Activated CD8-positive, alpha-beta T cell treated with anti-CD3 and anti-CD28 coated beads for 36 hours (primary cell): ENCODE measurements at regions of chr10 and their contacts with region 1.

Region 1: DNA sequence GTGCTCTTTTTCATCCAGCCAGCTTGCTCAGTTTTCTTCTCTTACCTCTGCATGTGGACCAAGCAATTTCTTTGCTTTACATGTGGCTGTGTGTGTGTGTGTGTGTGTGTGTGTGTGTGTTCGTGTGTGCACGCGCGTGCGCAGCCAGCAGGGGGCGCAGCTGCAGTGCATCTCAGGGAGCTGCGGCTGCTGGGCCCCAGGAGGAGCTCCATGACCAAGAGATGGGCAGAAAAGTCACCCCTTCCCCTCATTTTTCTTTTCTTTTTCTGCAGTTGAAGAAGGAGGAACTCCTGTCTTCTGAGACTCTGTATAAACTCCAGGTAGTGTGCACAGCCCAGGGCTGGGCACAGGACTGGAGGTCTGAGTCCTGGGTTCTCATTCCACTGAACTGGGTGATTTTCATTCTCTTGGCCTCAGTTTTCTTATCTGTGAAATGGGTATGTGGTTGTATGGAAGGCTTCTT is 41.8 kb downstream of the BLNK start:
- DNase-seq: peak; percentile 82
- ATAC-seq: peak; percentile 87
- H3K4me3 Mint-ChIP-seq: no peak overlapping the region
- H3K27ac Mint-ChIP-seq: no peak overlapping the region
- H3K4me1 Mint-ChIP-seq: no peaks in the 10 kb centered on the region
- H3K27me3 Mint-ChIP-seq: no peaks in the 10 kb centered on the region
- CTCF ChIP-seq: peak; percentile 75

Region 2: DNA sequence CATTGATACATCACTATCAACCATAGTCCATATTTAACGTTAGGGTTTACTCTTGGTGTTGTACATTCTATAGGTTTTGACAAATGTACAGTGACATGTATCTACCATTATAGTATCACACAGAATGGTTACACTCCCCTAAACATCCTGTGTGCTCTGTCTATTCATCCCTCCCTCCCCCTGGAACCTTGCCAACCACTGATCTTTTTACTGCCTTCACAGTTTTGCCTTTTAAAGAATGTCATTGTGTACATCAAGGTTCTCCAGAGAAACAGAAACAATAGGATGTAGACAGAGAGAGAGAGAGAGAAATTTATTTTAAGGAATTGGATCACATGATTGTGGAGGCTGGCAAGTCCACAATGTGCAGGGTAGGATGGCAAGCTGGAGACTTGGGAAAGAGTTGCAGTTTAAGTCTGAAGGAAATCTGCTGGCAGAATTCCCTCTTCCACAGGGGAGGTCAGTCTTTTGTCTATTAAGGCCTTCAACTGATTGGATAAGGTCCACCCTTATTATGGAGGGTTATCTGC is 231.3 kb before region 1 on chr10:
- CTCF ChIA-PET with region 1: interaction called, 12 read pairs
- POLR2A ChIA-PET with region 1: no interaction called
- intact Hi-C with region 1: no loop called
- DNase-seq: no peak
- ATAC-seq: no peak
- H3K4me3 Mint-ChIP-seq: no peak overlapping the region
- H3K27ac Mint-ChIP-seq: no peak overlapping the region
- H3K4me1 Mint-ChIP-seq: no peaks in the 10 kb centered on the region
- H3K27me3 Mint-ChIP-seq: no peaks in the 10 kb centered on the region
- CTCF ChIP-seq: no peak

Region 3: DNA sequence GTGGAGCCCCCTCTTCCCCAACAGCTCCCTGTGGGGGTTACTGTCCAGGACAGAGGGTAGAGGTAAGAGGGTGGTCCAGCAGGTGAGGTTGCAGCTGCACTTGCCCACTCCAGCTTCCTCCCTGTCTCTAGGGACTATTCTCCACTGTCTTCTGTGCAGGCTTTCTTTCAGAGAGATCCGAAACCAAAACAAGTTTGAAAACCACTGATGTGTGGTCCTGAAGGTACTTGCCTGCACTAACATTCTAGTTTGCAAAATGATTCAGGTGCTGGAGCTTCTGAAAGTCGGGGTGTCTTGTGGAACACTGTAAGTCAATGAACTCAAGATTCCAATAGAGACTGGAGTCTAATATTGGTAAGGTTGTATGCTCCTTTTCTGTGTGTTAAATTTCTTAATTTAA is 21.3 kb before region 1 on chr10:
- CTCF ChIA-PET with region 1: interaction called, 15 read pairs
- POLR2A ChIA-PET with region 1: no interaction called
- intact Hi-C with region 1: no loop called
- DNase-seq: no peak
- ATAC-seq: no peak
- H3K4me3 Mint-ChIP-seq: no peak overlapping the region
- H3K27ac Mint-ChIP-seq: no peak overlapping the region
- H3K4me1 Mint-ChIP-seq: no peaks in the 10 kb centered on the region
- H3K27me3 Mint-ChIP-seq: peaks cover 2% of the 10 kb centered on the region
- CTCF ChIP-seq: no peak

Region 4: GRCh38 chr10:96287392-96288105 is 58.0 kb after region 1 on chr10:
- CTCF ChIA-PET with region 1: interaction called, 102 read pairs
- POLR2A ChIA-PET with region 1: no interaction called
- intact Hi-C with region 1: no loop called
- DNase-seq: no peak
- ATAC-seq: peak; percentile 45
- H3K4me3 Mint-ChIP-seq: peak overlapping the region; percentile 22
- H3K27ac Mint-ChIP-seq: no peak overlapping the region
- H3K4me1 Mint-ChIP-seq: peaks cover 14% of the 10 kb centered on the region
- H3K27me3 Mint-ChIP-seq: peaks cover 2% of the 10 kb centered on the region
- CTCF ChIP-seq: no peak

Region 5: GRCh38 chr10:96299383-96299782 is 69.8 kb after region 1 on chr10:
- CTCF ChIA-PET with region 1: interaction called, 102 read pairs
- POLR2A ChIA-PET with region 1: interaction called, 3 read pairs
- intact Hi-C with region 1: no loop called
- DNase-seq: peak; percentile 21
- ATAC-seq: peak; percentile 12
- H3K4me3 Mint-ChIP-seq: peak overlapping the region; percentile 47
- H3K27ac Mint-ChIP-seq: peak overlapping the region; percentile 80
- H3K4me1 Mint-ChIP-seq: peaks cover 52% of the 10 kb centered on the region
- H3K27me3 Mint-ChIP-seq: no peaks in the 10 kb centered on the region
- CTCF ChIP-seq: no peak

Region 6: DNA sequence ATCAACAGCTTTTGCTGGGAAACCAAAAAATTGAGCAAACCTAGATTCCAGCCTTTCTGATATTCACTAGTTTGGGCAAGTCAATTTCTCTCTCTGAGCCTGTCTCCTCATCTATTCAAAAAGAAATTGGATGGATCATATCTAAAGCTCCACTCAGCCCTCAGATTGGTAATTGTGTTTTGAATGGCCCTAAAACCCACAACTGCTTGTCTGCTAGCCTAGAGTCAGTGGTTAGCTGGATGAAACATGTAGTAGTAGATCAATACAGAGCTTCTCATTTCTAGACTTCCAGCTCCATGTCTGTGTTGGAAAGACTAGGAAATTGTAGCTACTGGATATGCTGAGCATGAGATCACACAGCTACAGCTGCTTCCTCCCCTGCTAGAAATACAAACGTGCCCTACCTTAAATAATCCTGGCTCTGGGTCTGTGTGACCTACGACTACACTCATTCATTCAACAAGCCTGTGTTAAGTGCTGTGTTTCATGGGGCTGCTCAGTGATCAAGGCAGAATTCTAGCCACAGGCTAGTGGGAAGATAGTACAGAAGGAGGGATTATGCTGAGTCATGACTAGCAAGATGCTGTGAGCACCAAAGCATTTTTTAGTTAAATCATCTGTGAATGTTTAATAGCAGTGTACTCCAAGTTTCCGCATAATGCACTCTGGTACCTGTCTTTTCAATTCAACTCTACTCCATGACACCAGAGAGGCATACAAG is 90.3 kb after region 1 on chr10:
- CTCF ChIA-PET with region 1: interaction called, 22 read pairs
- POLR2A ChIA-PET with region 1: no interaction called
- intact Hi-C with region 1: no loop called
- DNase-seq: no peak
- ATAC-seq: no peak
- H3K4me3 Mint-ChIP-seq: no peak overlapping the region
- H3K27ac Mint-ChIP-seq: peak overlapping the region; percentile 7
- H3K4me1 Mint-ChIP-seq: no peaks in the 10 kb centered on the region
- H3K27me3 Mint-ChIP-seq: peaks cover 10% of the 10 kb centered on the region
- CTCF ChIP-seq: no peak

Region 7: DNA sequence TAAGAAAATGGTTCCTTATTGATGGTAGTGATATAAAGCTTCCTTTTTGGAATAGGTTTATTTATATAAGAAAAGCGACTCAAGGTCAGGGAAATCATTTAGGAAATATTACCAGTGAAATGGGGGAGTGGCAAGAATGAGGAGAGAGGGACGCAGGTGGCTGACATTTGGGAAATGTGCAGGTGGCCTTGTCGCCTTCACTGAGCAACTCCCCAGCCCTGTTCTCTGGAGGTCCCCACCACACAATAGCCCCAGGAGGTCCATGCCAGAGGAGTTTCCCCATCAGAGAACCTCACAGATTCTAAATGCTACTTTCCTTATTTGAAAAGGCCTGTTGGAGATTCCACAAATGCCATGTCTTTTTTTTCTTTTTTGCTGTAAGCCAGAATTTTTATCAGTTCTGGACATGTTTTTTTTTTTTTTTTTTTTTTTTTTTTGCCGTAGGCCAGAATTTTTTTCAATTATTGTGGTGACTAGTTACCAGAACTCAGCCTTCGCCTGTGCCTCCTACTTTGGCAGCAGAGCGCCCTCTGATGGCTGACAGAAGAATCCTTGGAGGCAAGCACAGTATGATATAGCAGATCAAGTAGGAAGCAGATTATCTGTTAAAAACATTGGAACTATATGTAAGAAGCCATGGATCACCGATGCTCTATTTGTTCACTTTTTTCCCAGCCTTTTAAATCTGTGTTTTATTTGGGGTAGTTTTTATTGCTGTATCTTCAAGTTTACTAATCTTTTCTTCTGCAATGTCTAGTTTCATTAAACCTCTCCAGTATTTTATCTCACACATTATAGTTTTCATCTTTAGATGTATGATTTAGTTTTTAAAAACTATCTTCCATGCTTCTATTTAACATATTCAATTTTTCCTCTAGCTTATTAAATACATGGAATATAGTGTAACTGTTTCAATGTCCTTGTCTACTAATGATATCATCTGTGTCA is 110.6 kb after region 1 on chr10:
- CTCF ChIA-PET with region 1: interaction called, 84 read pairs
- POLR2A ChIA-PET with region 1: interaction called, 3 read pairs
- intact Hi-C with region 1: loop called (anchors 5 kb)
- DNase-seq: peak; percentile 81
- ATAC-seq: peak; percentile 88
- H3K4me3 Mint-ChIP-seq: no peak overlapping the region
- H3K27ac Mint-ChIP-seq: no peak overlapping the region
- H3K4me1 Mint-ChIP-seq: no peaks in the 10 kb centered on the region
- H3K27me3 Mint-ChIP-seq: no peaks in the 10 kb centered on the region
- CTCF ChIP-seq: peak; percentile 84